CD8-positive, alpha-beta T cell (primary cell): ENCODE measurements at regions of chr17 and their contacts with region 1.

Region 1: GRCh38 chr17:76397687-76398487 is 13.5 kb downstream of the SPHK1 start:
- DNase-seq: peak; percentile 73 to 90 (median 84)
- ATAC-seq: peak; percentile 95
- H3K4me3 ChIP-seq: no peak overlapping the region
- H3K4me3 Mint-ChIP-seq: no peak overlapping the region
- H3K27ac ChIP-seq: no peak overlapping the region
- H3K27ac Mint-ChIP-seq: no peak overlapping the region
- H3K4me1 ChIP-seq: no peaks in the 10 kb centered on the region
- H3K4me1 Mint-ChIP-seq: no peaks in the 10 kb centered on the region
- H3K27me3 ChIP-seq: no peaks in the 10 kb centered on the region
- H3K27me3 Mint-ChIP-seq: no peaks in the 10 kb centered on the region
- CTCF ChIP-seq: peak; percentile 98

Region 2: GRCh38 chr17:76219670-76220383 is 178.1 kb before region 1 on chr17:
- CTCF ChIA-PET with region 1: no interaction called
- POLR2A ChIA-PET with region 1: no interaction called
- intact Hi-C with region 1: no loop called
- DNase-seq: no peak
- ATAC-seq: no peak
- H3K4me3 ChIP-seq: no peak overlapping the region
- H3K4me3 Mint-ChIP-seq: no peak overlapping the region
- H3K27ac ChIP-seq: no peak overlapping the region
- H3K27ac Mint-ChIP-seq: peak overlapping the region; percentile 27
- H3K4me1 ChIP-seq: no peaks in the 10 kb centered on the region
- H3K4me1 Mint-ChIP-seq: peaks cover 43% of the 10 kb centered on the region
- H3K27me3 ChIP-seq: no peaks in the 10 kb centered on the region
- H3K27me3 Mint-ChIP-seq: no peaks in the 10 kb centered on the region
- CTCF ChIP-seq: no peak

Region 3: GRCh38 chr17:76296186-76296585 is 101.7 kb before region 1 on chr17:
- CTCF ChIA-PET with region 1: interaction called, 179 read pairs
- POLR2A ChIA-PET with region 1: no interaction called
- intact Hi-C with region 1: no loop called
- DNase-seq: no peak
- ATAC-seq: no peak
- H3K4me3 ChIP-seq: no peak overlapping the region
- H3K4me3 Mint-ChIP-seq: no peak overlapping the region
- H3K27ac ChIP-seq: no peak overlapping the region
- H3K27ac Mint-ChIP-seq: no peak overlapping the region
- H3K4me1 ChIP-seq: no peaks in the 10 kb centered on the region
- H3K4me1 Mint-ChIP-seq: peaks cover 1% of the 10 kb centered on the region
- H3K27me3 ChIP-seq: no peaks in the 10 kb centered on the region
- H3K27me3 Mint-ChIP-seq: no peaks in the 10 kb centered on the region
- CTCF ChIP-seq: no peak

Region 4: GRCh38 chr17:76318586-76318985 is 79.3 kb before region 1 on chr17:
- CTCF ChIA-PET with region 1: interaction called, 13 read pairs
- POLR2A ChIA-PET with region 1: no interaction called
- intact Hi-C with region 1: no loop called
- DNase-seq: no peak
- ATAC-seq: no peak
- H3K4me3 ChIP-seq: no peak overlapping the region
- H3K4me3 Mint-ChIP-seq: no peak overlapping the region
- H3K27ac ChIP-seq: no peak overlapping the region
- H3K27ac Mint-ChIP-seq: no peak overlapping the region
- H3K4me1 ChIP-seq: no peaks in the 10 kb centered on the region
- H3K4me1 Mint-ChIP-seq: no peaks in the 10 kb centered on the region
- H3K27me3 ChIP-seq: no peaks in the 10 kb centered on the region
- H3K27me3 Mint-ChIP-seq: no peaks in the 10 kb centered on the region
- CTCF ChIP-seq: no peak

Region 5: GRCh38 chr17:76353599-76354316 is 44.1 kb before region 1 on chr17 and contains the start of gene PRPSAP1:
- CTCF ChIA-PET with region 1: interaction called, 25 read pairs
- POLR2A ChIA-PET with region 1: interaction called, 3 read pairs
- intact Hi-C with region 1: no loop called
- DNase-seq: peak; percentile 61 to 91 (median 83)
- ATAC-seq: peak; percentile 94
- H3K4me3 ChIP-seq: peak within 1 kb of the TSS; percentile 69 to 82
- H3K4me3 Mint-ChIP-seq: peak within 1 kb of the TSS; percentile 95
- H3K27ac ChIP-seq: peak within 1 kb of the TSS; percentile 53 to 95
- H3K27ac Mint-ChIP-seq: peak within 1 kb of the TSS; percentile 98
- H3K4me1 ChIP-seq: peaks cover 4% of the 10 kb centered on the region
- H3K4me1 Mint-ChIP-seq: peaks cover 24% of the 10 kb centered on the region
- H3K27me3 ChIP-seq: no peaks in the 10 kb centered on the region
- H3K27me3 Mint-ChIP-seq: no peaks in the 10 kb centered on the region
- CTCF ChIP-seq: peak; percentile 47
- total RNA-seq, gene PRPSAP1: 10.5 to 12.5 TPM

Region 6: DNA sequence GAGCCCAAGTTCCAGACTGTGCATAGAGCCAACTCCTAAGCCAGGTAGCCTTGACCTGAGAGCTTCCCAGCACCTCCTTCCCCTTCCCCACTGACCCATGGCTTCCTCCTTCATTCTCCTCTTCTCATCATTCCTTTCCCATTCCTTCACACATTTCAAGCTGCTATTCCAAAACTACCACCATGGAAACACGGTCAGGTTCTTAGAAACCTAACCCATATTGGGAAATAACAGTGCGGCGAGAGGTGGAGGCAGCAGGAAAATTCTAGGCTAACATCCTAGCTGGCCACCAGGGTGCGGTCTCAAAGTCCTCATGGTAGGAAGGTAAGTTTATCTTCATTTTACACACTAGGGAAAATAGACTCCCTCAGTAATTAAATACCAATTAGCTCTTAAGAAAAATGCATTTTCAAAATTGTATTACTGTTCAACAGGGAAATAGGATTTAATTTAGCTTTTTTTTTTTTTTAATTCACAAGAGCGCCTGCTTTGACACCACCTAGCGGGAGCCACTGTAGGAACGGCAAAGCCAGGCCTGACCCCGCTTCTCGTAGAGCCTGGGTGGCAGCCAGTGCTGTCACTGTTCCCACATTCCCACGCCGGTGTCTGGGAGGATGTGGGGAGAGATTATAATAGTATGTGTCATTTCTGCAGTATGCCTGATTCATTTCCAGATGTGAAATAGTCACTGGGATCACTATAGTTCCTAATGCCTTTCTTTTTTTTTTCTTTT is 27.5 kb before region 1 on chr17:
- CTCF ChIA-PET with region 1: interaction called, 16 read pairs
- POLR2A ChIA-PET with region 1: no interaction called
- intact Hi-C with region 1: loop called in 1 of 2 experiments (anchors 2 kb)
- DNase-seq: no peak
- ATAC-seq: no peak
- H3K4me3 ChIP-seq: no peak overlapping the region
- H3K4me3 Mint-ChIP-seq: no peak overlapping the region
- H3K27ac ChIP-seq: no peak overlapping the region
- H3K27ac Mint-ChIP-seq: no peak overlapping the region
- H3K4me1 ChIP-seq: no peaks in the 10 kb centered on the region
- H3K4me1 Mint-ChIP-seq: no peaks in the 10 kb centered on the region
- H3K27me3 ChIP-seq: no peaks in the 10 kb centered on the region
- H3K27me3 Mint-ChIP-seq: no peaks in the 10 kb centered on the region
- CTCF ChIP-seq: no peak

Region 7: GRCh38 chr17:76408052-76408849 is 10.4 kb after region 1 on chr17:
- CTCF ChIA-PET with region 1: interaction called, 58 read pairs
- POLR2A ChIA-PET with region 1: no interaction called
- intact Hi-C with region 1: no loop called
- DNase-seq: peak; percentile 53 to 81 (median 75)
- ATAC-seq: peak; percentile 92
- H3K4me3 ChIP-seq: no peak overlapping the region
- H3K4me3 Mint-ChIP-seq: no peak overlapping the region
- H3K27ac ChIP-seq: no peak overlapping the region
- H3K27ac Mint-ChIP-seq: peak overlapping the region; percentile 70
- H3K4me1 ChIP-seq: peaks cover 4% of the 10 kb centered on the region
- H3K4me1 Mint-ChIP-seq: peaks cover 9% of the 10 kb centered on the region
- H3K27me3 ChIP-seq: no peaks in the 10 kb centered on the region
- H3K27me3 Mint-ChIP-seq: no peaks in the 10 kb centered on the region
- CTCF ChIP-seq: peak; percentile 87

Region 8: DNA sequence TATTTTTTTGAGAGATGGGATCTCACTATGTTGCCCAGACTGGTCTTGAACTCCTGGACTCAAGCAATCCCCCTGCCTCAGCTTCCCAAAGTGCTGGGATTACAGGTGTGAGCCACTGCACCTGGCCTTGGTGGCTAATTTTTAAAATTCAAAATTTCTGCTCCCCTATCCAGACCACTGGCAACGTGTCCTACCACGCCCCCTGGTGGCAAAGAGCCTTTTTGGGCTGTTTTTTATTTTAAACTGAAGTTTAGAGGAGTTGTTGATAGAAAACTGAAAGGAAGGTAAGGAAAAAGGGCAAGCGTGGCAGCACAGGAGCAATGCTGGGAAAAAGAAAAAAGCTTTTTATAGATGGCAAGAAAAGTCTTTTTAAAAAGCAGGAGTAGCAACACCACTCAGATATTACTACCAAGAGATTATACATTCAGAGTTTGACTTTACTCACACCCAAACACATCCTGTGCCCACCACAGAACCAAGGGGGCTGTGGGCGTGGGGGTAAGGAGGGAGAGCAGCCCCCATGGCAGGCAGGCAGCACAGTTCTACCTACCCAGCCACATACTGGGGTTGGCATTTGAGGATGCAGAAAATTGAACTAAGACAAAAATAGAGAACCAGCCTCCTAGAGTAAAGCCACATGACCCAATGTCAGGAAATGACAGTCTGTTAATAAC is 317.1 kb after region 1 on chr17:
- CTCF ChIA-PET with region 1: no interaction called
- POLR2A ChIA-PET with region 1: no interaction called
- intact Hi-C with region 1: no loop called
- DNase-seq: peak; percentile 57 to 88 (median 76)
- ATAC-seq: peak; percentile 5
- H3K4me3 ChIP-seq: peak overlapping the region in 1 of 2 experiments; percentile 4
- H3K4me3 Mint-ChIP-seq: peak overlapping the region; percentile 55
- H3K27ac ChIP-seq: peak overlapping the region; percentile 71 to 83
- H3K27ac Mint-ChIP-seq: peak overlapping the region; percentile 97
- H3K4me1 ChIP-seq: peaks cover 54% of the 10 kb centered on the region
- H3K4me1 Mint-ChIP-seq: peaks cover 57% of the 10 kb centered on the region
- H3K27me3 ChIP-seq: no peaks in the 10 kb centered on the region
- H3K27me3 Mint-ChIP-seq: no peaks in the 10 kb centered on the region
- CTCF ChIP-seq: peak; percentile 95